HepG2 (cell line): ENCODE measurements at regions of chr5 and their contacts with region 1.

Region 1: DNA sequence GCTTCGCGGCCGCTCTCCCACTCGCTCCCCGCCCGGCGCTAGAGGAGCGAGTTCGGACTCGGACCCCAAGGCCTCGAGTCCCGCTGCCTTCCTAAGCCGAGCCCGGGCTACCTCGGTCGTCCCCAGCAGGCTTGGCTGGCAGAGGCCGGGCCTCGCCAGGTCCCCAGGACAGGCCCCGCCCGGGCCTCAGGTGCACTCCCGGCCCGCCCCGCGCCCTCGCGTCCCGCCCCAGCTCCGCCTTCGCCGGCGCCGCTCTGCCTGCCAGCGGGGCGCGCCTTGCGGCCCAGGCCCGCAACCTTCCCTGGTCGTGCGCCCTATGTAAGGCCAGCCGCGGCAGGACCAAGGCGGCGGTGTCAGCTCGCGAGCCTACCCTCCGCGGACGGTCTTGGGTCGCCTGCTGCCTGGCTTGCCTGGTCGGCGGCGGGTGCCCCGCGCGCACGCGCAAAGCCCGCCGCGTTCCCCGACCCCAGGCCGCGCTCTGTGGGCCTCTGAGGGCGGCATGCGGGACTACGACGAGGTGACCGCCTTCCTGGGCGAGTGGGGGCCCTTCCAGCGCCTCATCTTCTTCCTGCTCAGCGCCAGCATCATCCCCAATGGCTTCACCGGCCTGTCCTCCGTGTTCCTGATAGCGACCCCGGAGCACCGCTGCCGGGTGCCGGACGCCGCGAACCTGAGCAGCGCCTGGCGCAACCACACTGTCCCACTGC is at the start of gene SLC22A5:
- DNase-seq: peak; percentile 62
- ATAC-seq: peak; percentile 93
- H3K4me3 ChIP-seq: peak within 1 kb of the TSS; percentile 71 to 84 (median 77)
- H3K27ac ChIP-seq: peak within 1 kb of the TSS; percentile 91
- H3K4me1 ChIP-seq: peaks cover 35% of the 10 kb centered on the region
- H3K27me3 ChIP-seq: no peaks in the 10 kb centered on the region
- CTCF ChIP-seq: no peak
- EP300 ChIP-seq: peak in 1 of 2 experiments; percentile 8; a peak in 1 of 4 replicates
- POLR2A ChIP-seq: peak; percentile 68 to 72
- RAD21 ChIP-seq: peak; percentile 52
- total RNA-seq, gene SLC22A5: 4.0 and 7.1 TPM in 2 replicates

Region 2: DNA sequence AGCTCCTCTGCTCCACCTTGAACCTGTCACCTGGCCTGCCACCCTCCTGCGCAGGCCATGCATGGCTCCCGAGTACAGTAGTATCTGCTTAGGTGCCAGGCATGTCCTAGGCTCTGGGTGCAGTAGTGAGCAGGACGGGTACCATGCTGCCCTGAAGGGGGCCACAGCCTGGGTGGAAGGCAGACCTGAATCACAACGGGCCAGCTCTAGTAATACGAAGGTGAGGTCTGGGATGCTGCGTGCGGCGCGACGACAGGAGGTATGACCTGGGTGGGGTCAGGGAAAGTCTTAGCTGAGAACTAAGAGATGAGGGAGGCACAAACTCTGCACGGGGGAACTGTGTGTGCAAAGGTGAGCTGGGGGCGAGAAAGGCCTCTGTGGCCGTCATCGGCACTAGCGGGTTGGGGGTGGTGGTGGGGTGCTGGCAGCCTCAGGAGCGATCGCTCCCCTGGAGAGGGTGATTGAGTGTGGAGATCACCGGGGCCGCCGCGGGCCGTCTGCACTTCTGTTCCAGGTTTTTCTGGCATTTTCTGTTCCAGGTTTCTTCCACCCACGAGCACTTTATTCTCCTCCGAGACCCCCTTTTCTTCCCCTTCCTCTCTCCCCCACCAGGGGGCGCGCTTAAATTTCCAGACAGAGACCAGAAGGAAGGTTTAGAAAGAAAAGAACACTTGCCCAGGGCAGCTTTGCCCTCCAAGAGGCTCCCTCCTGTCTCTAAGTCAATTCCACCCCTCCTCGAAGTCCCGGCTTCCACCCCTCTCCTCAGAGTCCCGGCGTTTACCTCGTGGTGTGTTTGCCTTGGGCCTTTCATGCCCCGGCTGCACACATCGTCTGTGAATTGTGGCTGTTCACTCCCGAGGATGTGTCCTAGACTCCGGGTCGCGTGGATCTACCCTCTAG is 97.1 kb before region 1 on chr5:
- CTCF ChIA-PET with region 1: no interaction called
- POLR2A ChIA-PET with region 1: no interaction called
- in situ Hi-C with region 1: no loop called
- intact Hi-C with region 1: loop called (anchors 5 kb)
- DNase-seq: peak; percentile 38
- ATAC-seq: peak; percentile 36
- H3K4me3 ChIP-seq: no peak overlapping the region
- H3K27ac ChIP-seq: no peak overlapping the region
- H3K4me1 ChIP-seq: peaks cover 52% of the 10 kb centered on the region
- H3K27me3 ChIP-seq: no peaks in the 10 kb centered on the region; a peak in 1 of 5 replicates
- CTCF ChIP-seq: peak; percentile 70
- EP300 ChIP-seq: no peak
- POLR2A ChIP-seq: no peak
- RAD21 ChIP-seq: peak; percentile 38; the same call in 1 of the 2 replicates

Region 3: DNA sequence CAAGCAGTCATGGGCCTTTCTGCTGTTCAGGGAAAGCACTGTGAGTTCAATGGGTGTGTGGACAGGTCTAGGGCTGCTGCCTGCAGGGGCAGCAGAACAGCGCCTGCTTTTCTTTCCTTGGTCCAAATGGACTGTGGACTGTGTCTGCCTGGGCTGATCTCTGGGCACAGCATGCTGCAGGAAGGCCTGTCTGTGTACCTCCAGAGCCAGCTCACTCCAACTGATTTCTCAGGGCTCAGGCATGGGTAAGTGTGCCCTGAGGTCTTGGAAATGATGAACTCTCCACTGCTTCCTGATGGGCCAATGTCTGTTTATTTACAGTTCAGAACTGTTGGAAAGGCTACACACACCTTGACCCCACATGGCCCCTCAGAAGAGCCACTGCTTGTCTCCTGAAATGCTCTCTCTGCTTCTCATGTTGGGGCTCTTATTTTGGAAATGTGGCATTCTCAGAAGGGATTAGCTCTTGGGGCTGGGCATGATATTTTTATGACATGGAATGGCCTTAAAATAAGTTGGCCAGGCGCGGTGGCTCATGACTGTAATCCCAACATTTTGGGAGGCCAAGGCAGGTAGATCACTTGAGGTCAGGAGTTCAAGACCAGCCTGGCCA is 48.4 kb before region 1 on chr5:
- CTCF ChIA-PET with region 1: no interaction called
- POLR2A ChIA-PET with region 1: interaction called, 5 read pairs
- in situ Hi-C with region 1: no loop called
- intact Hi-C with region 1: loop called (anchors 1 kb)
- DNase-seq: peak; percentile 67
- ATAC-seq: peak; percentile 100
- H3K4me3 ChIP-seq: peak overlapping the region in 1 of 3 experiments; percentile 12; a peak in 1 of 6 replicates
- H3K27ac ChIP-seq: peak overlapping the region; percentile 37
- H3K4me1 ChIP-seq: peaks cover 25% of the 10 kb centered on the region
- H3K27me3 ChIP-seq: no peaks in the 10 kb centered on the region
- CTCF ChIP-seq: peak; percentile 58
- EP300 ChIP-seq: no peak
- POLR2A ChIP-seq: no peak
- RAD21 ChIP-seq: 0 out of 2 replicates have a peak, but pooled peaks have one; percentile 25

Region 4: DNA sequence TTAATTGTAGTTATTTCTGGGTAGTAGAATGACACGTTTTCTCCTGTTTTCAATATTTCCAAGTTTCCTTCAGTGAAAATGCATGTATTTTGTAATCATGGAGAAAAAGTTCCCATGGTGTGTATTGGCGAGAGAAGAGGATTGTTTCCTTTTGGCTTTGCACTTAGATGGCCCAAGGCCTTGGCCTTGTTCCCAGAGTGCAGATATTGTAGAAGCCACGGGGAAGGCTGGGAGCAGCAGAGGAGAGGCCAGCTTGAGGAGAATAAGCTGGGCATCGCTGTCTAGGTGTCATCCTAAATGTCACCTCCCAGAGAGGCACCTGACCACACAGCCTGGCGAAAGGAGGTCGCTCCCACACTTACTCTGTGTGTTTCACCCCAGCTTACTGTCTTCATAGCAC is 77.0 kb after region 1 on chr5:
- CTCF ChIA-PET with region 1: no interaction called
- POLR2A ChIA-PET with region 1: no interaction called
- in situ Hi-C with region 1: no loop called
- intact Hi-C with region 1: no loop called
- DNase-seq: no peak
- ATAC-seq: no peak
- H3K4me3 ChIP-seq: no peak overlapping the region
- H3K27ac ChIP-seq: no peak overlapping the region
- H3K4me1 ChIP-seq: no peaks in the 10 kb centered on the region
- H3K27me3 ChIP-seq: no peaks in the 10 kb centered on the region
- CTCF ChIP-seq: no peak
- EP300 ChIP-seq: no peak
- POLR2A ChIP-seq: no peak
- RAD21 ChIP-seq: no peak

Region 5: GRCh38 chr5:132466433-132467286 is 97.0 kb after region 1 on chr5:
- CTCF ChIA-PET with region 1: no interaction called
- POLR2A ChIA-PET with region 1: no interaction called
- in situ Hi-C with region 1: no loop called
- intact Hi-C with region 1: no loop called
- DNase-seq: peak; percentile 61
- ATAC-seq: peak; percentile 58
- H3K4me3 ChIP-seq: peak overlapping the region in 1 of 3 experiments; percentile 8; a peak in 1 of 6 replicates
- H3K27ac ChIP-seq: peak overlapping the region; percentile 46
- H3K4me1 ChIP-seq: peaks cover 92% of the 10 kb centered on the region
- H3K27me3 ChIP-seq: no peaks in the 10 kb centered on the region
- CTCF ChIP-seq: no peak
- EP300 ChIP-seq: no peak
- POLR2A ChIP-seq: no peak
- RAD21 ChIP-seq: no peak